ENCODE measurements at regions of chr2 and their contacts with region 1.

Region 1: DNA sequence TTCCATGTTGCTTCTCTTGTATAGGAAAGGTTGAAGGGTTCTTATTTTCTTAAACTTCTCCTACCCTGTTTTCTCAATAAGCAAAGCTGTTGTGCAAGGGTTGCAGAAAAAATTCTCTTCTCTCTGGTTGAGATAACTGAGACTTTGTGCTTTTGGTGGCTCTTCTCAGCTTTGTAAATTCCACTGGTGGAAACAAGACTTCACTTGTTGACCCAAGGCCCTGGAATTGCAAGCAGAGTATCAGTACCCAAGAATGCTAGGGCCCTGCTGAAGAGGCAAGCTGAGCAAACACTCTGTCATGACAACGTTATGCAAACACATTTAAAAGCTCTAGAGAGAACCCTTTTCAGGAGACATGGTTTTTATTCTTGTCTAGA is 294.7 kb upstream of the EPAS1 start:
- DNase-seq: peak; percentile 79
- ATAC-seq: peak; percentile 71
- H3K4me3 ChIP-seq: no peak overlapping the region
- H3K27ac ChIP-seq: peak overlapping the region; percentile 87
- H3K4me1 ChIP-seq: peaks cover 20% of the 10 kb centered on the region
- H3K27me3 ChIP-seq: no peaks in the 10 kb centered on the region
- CTCF ChIP-seq: no peak
- POLR2A ChIP-seq: no peak
- RAD21 ChIP-seq: no peak

Region 2: GRCh38 chr2:45712570-45712969 is 289.9 kb before region 1 on chr2:
- CTCF ChIA-PET with region 1: no interaction called
- POLR2A ChIA-PET with region 1: no interaction called
- dilution Hi-C with region 1: no loop called
- in situ Hi-C with region 1: no loop called
- intact Hi-C with region 1: no loop called
- DNase-seq: no peak
- ATAC-seq: no peak
- H3K4me3 ChIP-seq: no peak overlapping the region
- H3K27ac ChIP-seq: no peak overlapping the region
- H3K4me1 ChIP-seq: no peaks in the 10 kb centered on the region
- H3K27me3 ChIP-seq: no peaks in the 10 kb centered on the region
- CTCF ChIP-seq: no peak
- POLR2A ChIP-seq: no peak
- RAD21 ChIP-seq: no peak

Region 3: GRCh38 chr2:46067851-46068305 is 65.4 kb after region 1 on chr2:
- CTCF ChIA-PET with region 1: interaction called, 6 read pairs
- POLR2A ChIA-PET with region 1: no interaction called
- dilution Hi-C with region 1: no loop called
- in situ Hi-C with region 1: no loop called
- intact Hi-C with region 1: loop called (anchors 5 kb)
- DNase-seq: peak; percentile 96
- ATAC-seq: peak; percentile 56
- H3K4me3 ChIP-seq: peak overlapping the region; percentile 32; the same call in 1 of the 2 replicates
- H3K27ac ChIP-seq: peak overlapping the region; percentile 50; the same call in 1 of the 2 replicates
- H3K4me1 ChIP-seq: peaks cover 26% of the 10 kb centered on the region
- H3K27me3 ChIP-seq: no peaks in the 10 kb centered on the region
- CTCF ChIP-seq: no peak
- POLR2A ChIP-seq: no peak
- RAD21 ChIP-seq: peak; percentile 30; the same call in 1 of the 2 replicates

Region 4: DNA sequence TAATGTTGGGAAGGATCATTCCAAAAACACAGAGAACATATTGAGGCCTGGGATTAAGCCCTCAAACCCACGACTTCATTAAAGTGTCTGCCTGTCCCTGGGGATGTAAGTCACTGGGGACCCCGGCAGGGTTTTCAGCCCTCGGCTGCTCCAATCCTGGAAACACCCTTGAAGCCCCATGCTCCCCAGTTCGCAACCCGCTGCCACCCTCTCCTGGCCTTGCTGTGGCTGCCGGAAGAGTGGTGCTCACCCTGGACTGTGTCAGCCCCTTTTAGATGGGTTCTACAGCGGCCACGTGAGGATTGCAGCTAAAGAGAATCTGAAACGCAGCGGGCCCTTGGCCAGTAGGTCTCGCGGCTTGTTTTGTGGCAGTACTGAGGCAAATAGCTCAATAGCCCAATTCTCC is 374.7 kb after region 1 on chr2:
- CTCF ChIA-PET with region 1: no interaction called
- POLR2A ChIA-PET with region 1: no interaction called
- dilution Hi-C with region 1: no loop called
- in situ Hi-C with region 1: loop called (anchors 25 kb)
- intact Hi-C with region 1: loop called (anchors 5 kb)
- DNase-seq: no peak
- ATAC-seq: no peak
- H3K4me3 ChIP-seq: no peak overlapping the region
- H3K27ac ChIP-seq: no peak overlapping the region
- H3K4me1 ChIP-seq: peaks cover 19% of the 10 kb centered on the region; the same call in 1 of the 2 replicates
- H3K27me3 ChIP-seq: no peaks in the 10 kb centered on the region
- CTCF ChIP-seq: no peak
- POLR2A ChIP-seq: no peak
- RAD21 ChIP-seq: no peak